ENCODE measurements at regions of chr12 and their contacts with region 1.

Region 1: DNA sequence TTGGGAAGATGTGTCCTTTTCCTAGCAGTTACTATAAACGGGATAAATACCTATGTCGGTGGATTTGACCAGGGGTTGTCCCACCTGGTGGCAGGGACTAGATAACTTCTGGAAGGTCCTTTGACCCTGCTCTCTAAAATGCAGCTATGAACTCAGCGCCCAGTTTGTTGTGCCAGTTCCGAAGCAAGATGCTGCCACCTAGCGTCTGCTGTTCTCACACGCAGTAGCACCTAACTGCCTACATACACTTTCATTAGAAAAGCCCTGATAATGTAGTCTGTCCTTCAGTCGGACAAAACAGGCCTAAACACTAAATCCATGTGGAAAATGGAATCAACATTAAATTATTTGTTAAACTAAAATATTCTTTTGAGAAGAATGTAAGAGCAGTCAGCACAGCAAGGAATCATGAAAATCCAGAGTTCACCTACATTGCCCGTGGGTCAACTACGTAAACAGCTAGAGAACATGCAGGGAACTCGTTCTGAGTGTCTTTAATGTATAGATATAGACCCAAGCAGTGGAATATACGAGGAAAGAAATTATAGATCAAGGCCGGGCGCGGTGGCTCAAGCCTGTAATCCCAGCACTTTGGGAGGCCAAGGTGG is 51.1 kb upstream of the CRACR2A start:
- DNase-seq: peak; percentile 87
- H3K4me3 ChIP-seq: no peak overlapping the region
- H3K27ac ChIP-seq: peak overlapping the region in 1 of 2 donors; percentile 36
- H3K4me1 ChIP-seq: peaks cover 5% of the 10 kb centered on the region
- H3K27me3 ChIP-seq: no peaks in the 10 kb centered on the region
- CTCF ChIP-seq: peak; percentile 47 to 84 (median 80)
- POLR2A ChIP-seq: no peak

Region 2: DNA sequence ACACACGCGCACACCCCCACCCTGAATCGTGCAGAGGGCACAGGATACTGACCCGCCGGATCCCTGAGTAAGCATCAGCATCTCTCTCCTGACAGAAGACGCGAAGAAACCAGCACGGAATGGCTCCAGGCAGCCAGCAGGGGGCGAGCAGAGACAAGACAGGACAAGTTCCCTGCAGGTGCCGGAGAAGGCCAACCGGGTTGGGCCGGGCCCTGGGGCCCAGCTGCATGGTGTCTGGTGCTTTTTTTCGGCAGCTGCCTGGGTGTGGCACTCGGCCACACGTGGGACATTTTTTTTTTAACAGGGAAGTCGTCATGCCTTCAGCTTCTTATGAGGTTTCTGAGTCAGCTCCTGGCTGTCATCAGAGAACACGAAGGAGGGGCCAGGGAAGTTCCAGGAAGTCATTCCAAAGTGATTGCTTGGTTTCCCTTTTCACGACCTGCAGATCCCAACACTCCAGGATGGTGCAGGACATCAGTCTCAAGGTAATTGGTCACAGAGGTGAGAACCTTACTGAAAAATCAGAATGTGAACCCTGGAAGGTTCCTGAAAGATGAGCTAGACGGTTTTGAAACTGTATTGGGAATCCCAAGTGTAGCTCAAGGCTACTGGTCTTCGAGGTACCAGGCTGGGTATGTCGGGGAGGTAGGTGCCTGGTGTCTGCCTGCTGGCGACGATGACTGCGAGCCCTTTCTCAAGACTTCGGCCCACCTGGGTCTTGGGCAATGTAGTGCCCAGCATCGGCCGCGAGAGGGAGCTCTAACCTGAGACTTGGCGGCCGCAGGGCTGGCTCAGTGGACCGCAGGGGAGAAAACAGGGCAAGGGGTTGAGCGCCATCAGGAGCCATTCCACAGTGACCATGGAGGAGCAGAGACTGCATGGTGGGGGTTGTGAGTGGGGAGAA is 503.8 kb before region 1 on chr12:
- intact Hi-C with region 1: loop called (anchors 5 kb)
- DNase-seq: peak; percentile 94
- H3K4me3 ChIP-seq: no peak overlapping the region
- H3K27ac ChIP-seq: peak overlapping the region; percentile 75 to 78
- H3K4me1 ChIP-seq: no peaks in the 10 kb centered on the region
- H3K27me3 ChIP-seq: no peaks in the 10 kb centered on the region
- CTCF ChIP-seq: peak; percentile 74 to 97 (median 96)
- POLR2A ChIP-seq: no peak

Region 3: DNA sequence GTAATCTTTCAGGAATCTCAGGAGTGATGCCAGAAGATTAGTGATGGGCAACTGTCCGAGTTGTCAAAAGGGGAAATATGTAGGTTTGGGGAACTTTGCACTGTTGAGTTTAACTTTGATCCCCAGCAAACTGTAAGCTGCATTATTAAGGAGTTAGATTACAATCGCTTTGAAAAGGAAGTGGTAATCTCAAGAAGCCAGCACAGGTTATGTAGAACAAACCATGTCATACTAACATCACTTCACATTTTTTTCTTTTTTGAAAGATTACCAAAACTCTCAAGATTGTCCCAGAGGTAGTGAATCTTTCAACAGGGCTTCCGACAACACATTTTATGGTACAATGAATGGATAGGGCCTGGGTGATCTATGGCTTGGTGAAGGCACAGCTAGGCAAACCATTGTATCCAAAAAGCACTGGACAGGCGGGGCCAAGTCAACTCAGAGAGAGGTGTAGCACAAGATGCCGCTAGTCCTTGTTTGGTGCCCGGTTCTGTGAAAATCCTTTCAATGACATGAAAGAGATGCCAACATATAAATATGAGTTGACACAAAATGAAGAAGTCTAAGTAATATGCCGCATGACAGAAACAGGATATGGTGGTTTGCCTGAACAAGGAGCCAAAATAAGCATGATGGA is 93.5 kb after region 1 on chr12:
- intact Hi-C with region 1: no loop called
- DNase-seq: no peak
- H3K4me3 ChIP-seq: no peak overlapping the region
- H3K27ac ChIP-seq: no peak overlapping the region
- H3K4me1 ChIP-seq: no peaks in the 10 kb centered on the region
- H3K27me3 ChIP-seq: no peaks in the 10 kb centered on the region
- CTCF ChIP-seq: no peak
- POLR2A ChIP-seq: no peak

Region 4: GRCh38 chr12:4164559-4165558 is 360.9 kb after region 1 on chr12:
- intact Hi-C with region 1: no loop called
- DNase-seq: no peak
- H3K4me3 ChIP-seq: peak overlapping the region; percentile 2 to 21
- H3K27ac ChIP-seq: no peak overlapping the region
- H3K4me1 ChIP-seq: no peaks in the 10 kb centered on the region
- H3K27me3 ChIP-seq: no peaks in the 10 kb centered on the region
- CTCF ChIP-seq: no peak
- POLR2A ChIP-seq: no peak